ENCODE measurements at regions of chr11 and their contacts with region 1.

Region 1: DNA sequence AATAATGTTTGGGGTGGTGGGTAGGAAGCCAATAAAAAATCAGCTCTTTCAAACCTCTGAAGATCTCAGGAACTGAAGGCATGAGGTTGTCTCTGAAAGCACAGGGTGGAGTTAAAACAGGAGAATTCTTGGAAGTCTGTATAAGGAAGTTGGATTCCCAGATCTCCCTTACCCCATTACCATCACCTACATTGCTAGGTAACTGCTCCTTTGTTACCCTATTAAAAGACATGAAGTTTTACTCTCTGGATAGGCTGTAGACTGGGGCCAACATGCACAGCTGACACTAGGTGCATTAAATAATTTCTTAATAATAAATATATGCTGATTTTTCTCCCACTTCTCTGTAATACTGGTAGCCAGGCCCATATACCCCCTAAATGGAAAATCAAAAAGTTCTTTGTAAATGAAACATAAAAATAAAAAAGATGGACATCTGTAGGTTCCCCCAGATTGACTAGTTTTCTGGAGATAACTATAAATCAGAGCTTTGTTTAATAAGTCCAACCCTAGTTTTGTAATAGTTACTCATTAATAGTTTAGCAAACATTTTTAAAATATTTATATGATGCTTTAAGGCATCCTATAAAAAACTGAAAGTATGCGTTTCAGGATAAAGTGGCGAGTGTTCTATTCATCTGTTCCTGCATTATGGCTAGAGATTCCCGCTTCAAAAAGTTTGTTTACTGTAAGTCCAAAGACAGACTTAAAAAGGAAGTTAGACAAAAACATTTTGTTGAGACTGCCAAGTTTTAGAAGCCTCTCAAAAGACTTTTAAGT is 63.8 kb downstream of the KIF18A start:
- DNase-seq: no peak
- ATAC-seq: no peak
- H3K4me3 ChIP-seq: no peak overlapping the region
- H3K27ac ChIP-seq: no peak overlapping the region
- H3K4me1 ChIP-seq: no peaks in the 10 kb centered on the region
- H3K27me3 ChIP-seq: no peaks in the 10 kb centered on the region
- CTCF ChIP-seq: no peak
- EP300 ChIP-seq: no peak
- POLR2A ChIP-seq: no peak
- RAD21 ChIP-seq: no peak

Region 2: DNA sequence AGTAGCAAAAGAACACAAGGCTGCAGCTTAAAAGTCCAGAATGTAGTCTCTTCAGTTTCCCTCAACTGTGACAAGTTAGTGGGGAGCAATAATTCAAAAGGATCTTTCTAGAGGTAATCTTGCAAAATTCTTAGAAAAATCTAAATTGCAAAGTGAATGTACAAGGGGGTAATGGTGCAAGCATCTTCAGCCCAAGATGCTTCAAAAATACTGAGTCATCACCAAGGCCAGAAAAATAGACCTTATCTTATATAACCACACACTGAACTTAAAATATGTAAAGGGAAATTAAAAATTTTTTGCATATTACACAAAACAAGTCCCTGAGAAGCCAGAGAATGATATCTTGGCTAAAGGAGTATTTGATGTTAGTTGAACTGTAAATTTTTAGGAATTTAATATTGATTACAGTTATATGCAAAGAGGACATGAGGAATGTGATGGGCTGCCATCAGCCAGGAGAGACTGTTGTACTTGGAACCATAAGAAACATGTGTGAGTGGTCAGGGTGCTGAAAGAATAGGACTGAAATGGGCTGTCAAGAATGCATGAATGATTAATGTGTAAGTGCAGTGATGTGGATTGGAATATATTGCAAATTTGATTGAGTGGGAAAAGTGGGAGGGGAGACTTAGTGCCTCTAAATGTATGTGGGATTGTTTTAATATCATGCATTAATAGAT is 451.9 kb before region 1 on chr11:
- CTCF ChIA-PET with region 1: no interaction called
- POLR2A ChIA-PET with region 1: no interaction called
- RAD21 ChIA-PET with region 1: no interaction called
- SMC1A ChIA-PET with region 1: no interaction called
- in situ Hi-C with region 1: no loop called
- intact Hi-C with region 1: no loop called
- DNase-seq: no peak
- ATAC-seq: no peak
- H3K4me3 ChIP-seq: no peak overlapping the region
- H3K27ac ChIP-seq: no peak overlapping the region
- H3K4me1 ChIP-seq: no peaks in the 10 kb centered on the region
- H3K27me3 ChIP-seq: no peaks in the 10 kb centered on the region
- CTCF ChIP-seq: no peak
- EP300 ChIP-seq: no peak
- POLR2A ChIP-seq: no peak
- RAD21 ChIP-seq: no peak

Region 3: GRCh38 chr11:27972522-27973170 is 71.5 kb before region 1 on chr11:
- CTCF ChIA-PET with region 1: no interaction called
- POLR2A ChIA-PET with region 1: no interaction called
- RAD21 ChIA-PET with region 1: no interaction called
- SMC1A ChIA-PET with region 1: no interaction called
- in situ Hi-C with region 1: no loop called
- intact Hi-C with region 1: no loop called
- DNase-seq: no peak
- ATAC-seq: no peak
- H3K4me3 ChIP-seq: no peak overlapping the region
- H3K27ac ChIP-seq: no peak overlapping the region
- H3K4me1 ChIP-seq: no peaks in the 10 kb centered on the region
- H3K27me3 ChIP-seq: no peaks in the 10 kb centered on the region
- CTCF ChIP-seq: no peak
- EP300 ChIP-seq: no peak
- POLR2A ChIP-seq: no peak
- RAD21 ChIP-seq: no peak

Region 4: GRCh38 chr11:28026634-28027290 is 17.4 kb before region 1 on chr11:
- CTCF ChIA-PET with region 1: no interaction called
- POLR2A ChIA-PET with region 1: no interaction called
- RAD21 ChIA-PET with region 1: no interaction called
- SMC1A ChIA-PET with region 1: interaction called, 11 read pairs
- in situ Hi-C with region 1: no loop called
- intact Hi-C with region 1: no loop called
- DNase-seq: no peak
- ATAC-seq: peak; percentile 76
- H3K4me3 ChIP-seq: no peak overlapping the region
- H3K27ac ChIP-seq: no peak overlapping the region
- H3K4me1 ChIP-seq: no peaks in the 10 kb centered on the region
- H3K27me3 ChIP-seq: no peaks in the 10 kb centered on the region
- CTCF ChIP-seq: no peak
- EP300 ChIP-seq: no peak
- POLR2A ChIP-seq: no peak
- RAD21 ChIP-seq: no peak

Region 5: GRCh38 chr11:28072321-28072720 is 28.2 kb after region 1 on chr11:
- CTCF ChIA-PET with region 1: no interaction called
- POLR2A ChIA-PET with region 1: no interaction called
- RAD21 ChIA-PET with region 1: no interaction called
- SMC1A ChIA-PET with region 1: no interaction called
- in situ Hi-C with region 1: no loop called
- intact Hi-C with region 1: no loop called
- DNase-seq: no peak
- ATAC-seq: no peak
- H3K4me3 ChIP-seq: no peak overlapping the region
- H3K27ac ChIP-seq: no peak overlapping the region
- H3K4me1 ChIP-seq: no peaks in the 10 kb centered on the region
- H3K27me3 ChIP-seq: no peaks in the 10 kb centered on the region
- CTCF ChIP-seq: no peak
- EP300 ChIP-seq: no peak
- POLR2A ChIP-seq: no peak
- RAD21 ChIP-seq: no peak

Measured in GM12878 (cell line).